Activated naive CD4-positive, alpha-beta T cell treated with anti-CD3 and anti-CD28 coated beads for 36 hours (primary cell): ENCODE measurements at regions of chr13 and their contacts with region 1.

Region 1: DNA sequence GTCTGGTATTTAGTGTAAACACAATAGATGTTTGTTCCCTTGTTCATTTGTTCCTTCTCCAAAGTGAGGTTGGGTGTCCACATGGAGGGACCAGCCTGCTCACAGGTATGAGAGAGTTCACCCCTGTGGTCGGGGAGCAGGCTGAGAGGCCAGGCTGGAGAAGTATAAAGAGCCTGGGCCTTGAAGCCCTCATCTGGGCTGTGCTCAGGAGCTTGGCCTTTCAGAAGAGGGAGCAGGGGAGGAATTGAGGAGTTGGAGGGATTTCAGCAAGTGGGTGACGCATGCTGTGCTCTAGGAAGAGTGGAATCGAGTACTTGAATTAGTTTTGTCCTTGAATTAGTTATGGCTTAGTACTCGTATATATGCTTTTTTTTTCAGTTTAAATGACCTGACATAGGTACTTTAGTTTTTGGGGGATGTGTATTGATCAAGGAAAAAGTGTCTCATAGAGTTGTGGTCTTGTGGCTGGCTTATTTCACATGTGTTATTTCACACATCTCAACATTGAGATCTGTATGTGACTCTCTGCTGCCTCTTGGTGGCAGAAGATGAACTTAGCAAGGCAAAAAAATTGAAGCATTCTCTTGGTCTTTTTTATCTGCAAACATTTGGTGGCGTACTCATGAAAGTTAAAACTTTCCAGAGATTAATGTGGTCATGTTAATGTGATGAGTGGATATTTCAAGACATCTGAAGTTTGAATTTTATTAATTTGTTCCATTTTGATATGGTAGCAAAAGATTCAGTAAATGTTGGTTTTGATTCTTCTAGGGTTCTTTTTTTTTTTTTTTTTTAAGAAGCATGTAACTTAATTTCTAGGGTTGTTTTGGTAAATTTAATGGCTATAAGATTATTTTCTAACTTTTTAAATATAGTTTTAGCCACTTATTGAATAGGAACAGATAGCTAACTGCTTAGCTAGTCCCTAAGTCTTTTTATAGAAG is 54.3 kb downstream of the SLAIN1 start:
- DNase-seq: peak; percentile 73
- H3K4me3 Mint-ChIP-seq: no peak overlapping the region
- H3K27ac Mint-ChIP-seq: no peak overlapping the region
- H3K4me1 Mint-ChIP-seq: peaks cover 18% of the 10 kb centered on the region
- H3K27me3 Mint-ChIP-seq: no peaks in the 10 kb centered on the region

Region 2: DNA sequence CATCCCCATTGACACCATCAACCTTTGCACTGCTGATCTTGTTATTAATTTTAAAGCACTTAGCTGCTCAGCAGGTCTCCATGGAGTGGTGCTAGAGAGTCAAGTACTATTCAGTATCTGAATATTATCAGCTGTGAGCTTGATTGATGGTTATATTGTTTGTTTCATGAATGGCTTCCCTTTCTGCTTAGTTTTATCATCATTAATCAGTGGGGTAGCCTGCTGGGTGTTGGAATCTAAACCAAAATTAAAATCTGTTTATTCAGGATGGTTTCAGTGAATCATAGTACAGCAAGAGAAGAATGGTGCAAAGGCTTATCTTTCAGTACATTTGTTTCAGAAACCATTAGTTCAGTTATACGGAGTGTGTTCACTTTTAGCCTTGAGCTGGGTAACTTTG is 258.8 kb before region 1 on chr13:
- CTCF ChIA-PET with region 1: interaction called, 8 read pairs
- intact Hi-C with region 1: loop called (anchors 1 kb)
- DNase-seq: peak; percentile 25
- H3K4me3 Mint-ChIP-seq: no peak overlapping the region
- H3K27ac Mint-ChIP-seq: no peak overlapping the region
- H3K4me1 Mint-ChIP-seq: no peaks in the 10 kb centered on the region
- H3K27me3 Mint-ChIP-seq: peaks cover 2% of the 10 kb centered on the region

Region 3: GRCh38 chr13:77595166-77595810 is 156.5 kb before region 1 on chr13:
- CTCF ChIA-PET with region 1: interaction called, 74 read pairs
- intact Hi-C with region 1: loop called (anchors 1 kb)
- DNase-seq: no peak
- H3K4me3 Mint-ChIP-seq: no peak overlapping the region
- H3K27ac Mint-ChIP-seq: no peak overlapping the region
- H3K4me1 Mint-ChIP-seq: no peaks in the 10 kb centered on the region
- H3K27me3 Mint-ChIP-seq: peaks cover 8% of the 10 kb centered on the region